Panc1 (cell line): ENCODE measurements at regions of chr1 and their contacts with region 1.

Region 1: DNA sequence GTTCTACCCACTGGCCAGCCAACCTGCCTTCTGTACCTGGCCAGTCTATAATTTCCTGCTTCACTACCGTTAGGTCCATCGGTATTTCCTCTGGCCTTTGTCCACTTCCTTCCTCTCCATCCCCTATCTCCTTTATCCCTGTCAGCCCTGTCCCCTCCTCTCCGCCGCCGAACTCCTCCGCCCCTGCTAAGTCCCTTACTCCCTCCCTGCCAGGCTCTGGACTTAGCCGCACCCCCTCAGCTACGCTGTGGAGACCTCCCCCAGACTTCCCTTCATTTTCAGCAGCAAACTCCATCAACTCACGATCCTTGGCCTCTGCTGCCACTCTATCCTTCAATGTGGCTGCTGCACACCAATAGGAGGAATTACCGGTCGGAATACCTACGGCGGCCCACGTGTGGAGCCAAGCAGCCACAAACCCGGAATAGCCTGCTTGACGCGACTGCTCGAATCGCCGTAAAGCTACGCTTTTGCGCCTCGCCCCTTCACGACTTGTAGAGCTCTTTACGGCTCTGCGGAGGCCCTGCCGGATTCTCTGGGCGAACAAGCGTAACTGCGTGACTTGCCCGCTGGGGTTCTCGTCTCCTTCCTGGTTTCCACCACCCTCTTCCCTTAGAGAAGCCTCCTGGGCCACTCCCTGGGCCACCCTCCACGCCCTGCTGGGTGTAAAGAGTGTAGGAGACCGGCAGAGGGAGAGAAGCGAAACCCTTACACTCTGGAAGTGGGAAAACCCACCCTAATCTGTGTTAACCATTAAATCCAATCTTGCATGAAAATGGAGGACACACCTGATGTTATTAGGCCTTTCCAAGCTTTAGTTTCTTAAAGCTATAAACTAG is at the start of gene ZNHIT6:
- DNase-seq: peak; percentile 98
- ATAC-seq: peak; percentile 97
- H3K4me3 ChIP-seq: peak within 1 kb of the TSS; percentile 57 to 76
- H3K27ac ChIP-seq: peak within 1 kb of the TSS; percentile 96
- H3K4me1 ChIP-seq: peaks cover 18% of the 10 kb centered on the region
- H3K27me3 ChIP-seq: no peaks in the 10 kb centered on the region
- CTCF ChIP-seq: peak; percentile 57
- total RNA-seq, gene ZNHIT6: 56.2 TPM

Region 2: DNA sequence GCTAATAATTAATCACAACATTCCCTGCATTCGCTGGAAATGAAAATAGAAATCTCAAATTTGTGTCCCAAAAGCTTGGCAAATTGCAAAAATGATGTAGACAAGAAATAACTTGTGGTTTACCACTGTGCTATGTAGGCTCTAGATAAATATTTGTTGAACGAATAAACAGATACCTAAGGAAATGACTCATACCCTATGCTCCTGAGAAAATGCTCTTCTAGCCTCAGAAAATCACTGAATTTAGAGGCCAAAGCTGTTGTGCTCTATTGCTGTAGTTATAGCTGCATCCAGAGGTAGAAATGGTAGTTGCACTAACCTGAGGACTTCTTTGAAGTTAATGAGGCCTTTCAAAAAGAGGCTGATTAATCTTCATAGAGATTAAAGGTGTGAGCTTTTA is 142.0 kb after region 1 on chr1:
- CTCF ChIA-PET with region 1: interaction called, 8 read pairs
- POLR2A ChIA-PET with region 1: no interaction called
- in situ Hi-C with region 1: no loop called
- intact Hi-C with region 1: loop called (anchors 5 kb)
- DNase-seq: peak; percentile 91
- ATAC-seq: peak; percentile 96
- H3K4me3 ChIP-seq: no peak overlapping the region
- H3K27ac ChIP-seq: peak overlapping the region; percentile 70; the same call in 1 of the 2 replicates
- H3K4me1 ChIP-seq: peaks cover 24% of the 10 kb centered on the region
- H3K27me3 ChIP-seq: no peaks in the 10 kb centered on the region
- CTCF ChIP-seq: peak; percentile 73; the same call in 1 of the 2 replicates

Region 3: GRCh38 chr1:85884372-85885035 is 176.3 kb after region 1 on chr1:
- CTCF ChIA-PET with region 1: no interaction called
- POLR2A ChIA-PET with region 1: no interaction called
- in situ Hi-C with region 1: no loop called
- intact Hi-C with region 1: loop called (anchors 5 kb)
- DNase-seq: peak; percentile 41
- ATAC-seq: peak; percentile 95
- H3K4me3 ChIP-seq: no peak overlapping the region
- H3K27ac ChIP-seq: no peak overlapping the region
- H3K4me1 ChIP-seq: no peaks in the 10 kb centered on the region
- H3K27me3 ChIP-seq: no peaks in the 10 kb centered on the region
- CTCF ChIP-seq: peak; percentile 86

Region 4: GRCh38 chr1:86018283-86018923 is 310.2 kb after region 1 on chr1:
- CTCF ChIA-PET with region 1: interaction called, 3 read pairs
- POLR2A ChIA-PET with region 1: no interaction called
- in situ Hi-C with region 1: no loop called
- intact Hi-C with region 1: loop called (anchors 2 kb)
- DNase-seq: peak; percentile 54
- ATAC-seq: peak; percentile 88
- H3K4me3 ChIP-seq: no peak overlapping the region
- H3K27ac ChIP-seq: no peak overlapping the region
- H3K4me1 ChIP-seq: no peaks in the 10 kb centered on the region
- H3K27me3 ChIP-seq: peaks cover 4% of the 10 kb centered on the region; the same call in 1 of the 2 replicates
- CTCF ChIP-seq: peak; percentile 96; the same call in 1 of the 2 replicates

Region 5: DNA sequence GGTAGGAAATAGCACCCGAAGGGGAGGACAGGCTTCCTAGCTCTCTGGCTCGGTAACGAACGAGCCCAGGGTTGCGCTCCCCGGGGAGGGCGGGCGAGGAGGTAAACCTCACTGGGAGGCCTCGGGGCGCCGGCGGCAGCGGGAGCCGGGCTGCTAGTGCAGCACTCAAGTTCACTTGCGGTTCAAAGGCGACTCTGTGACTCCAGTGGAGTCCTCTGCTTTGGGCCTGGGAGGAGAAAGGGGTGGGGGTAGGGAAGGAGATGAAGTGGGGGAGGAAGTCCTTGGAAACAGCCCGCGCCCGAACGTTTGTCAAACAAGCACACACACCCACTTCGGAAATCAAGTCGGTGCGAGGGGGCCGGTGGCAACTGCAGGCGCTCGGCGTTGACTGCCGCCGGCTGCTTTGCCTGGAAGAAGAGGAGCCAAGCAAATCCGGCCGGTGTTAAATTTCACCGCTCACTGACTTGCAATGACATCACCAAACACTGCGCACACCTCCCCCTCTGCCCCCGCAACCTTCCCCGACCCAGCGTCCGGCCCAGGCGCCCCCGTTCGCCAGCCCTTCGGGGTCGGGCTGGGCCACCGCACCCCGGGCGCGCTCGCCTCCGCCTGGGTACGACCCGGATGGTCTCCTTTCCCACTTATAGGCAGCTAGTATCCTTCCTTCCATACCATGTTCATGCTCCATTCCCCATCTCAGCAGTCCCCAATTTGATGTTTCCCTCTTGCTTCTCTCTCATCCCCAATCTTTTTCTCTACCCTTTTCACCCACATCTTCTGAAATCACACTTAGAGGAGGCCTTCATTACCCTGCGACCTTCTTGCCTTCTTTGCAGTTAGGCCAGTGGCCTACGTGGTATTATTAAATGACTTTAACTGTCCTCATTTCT is 448.6 kb after region 1 on chr1 and contains the start of gene COL24A1:
- CTCF ChIA-PET with region 1: no interaction called
- POLR2A ChIA-PET with region 1: no interaction called
- in situ Hi-C with region 1: no loop called
- intact Hi-C with region 1: loop called (anchors 10 kb)
- DNase-seq: no peak
- ATAC-seq: peak; percentile 72
- H3K4me3 ChIP-seq: peak within 1 kb of the TSS; percentile 24 to 46
- H3K27ac ChIP-seq: no peak within 1 kb of the TSS
- H3K4me1 ChIP-seq: 0 out of 2 replicates have a peak, but pooled peaks cover 7% of the 10 kb centered on the region
- H3K27me3 ChIP-seq: peaks cover 37% of the 10 kb centered on the region
- CTCF ChIP-seq: no peak
- total RNA-seq, gene COL24A1: 0.08 TPM